OCI-LY7 (cell line): ENCODE measurements at regions of chr1 and their contacts with region 1.

Region 1: DNA sequence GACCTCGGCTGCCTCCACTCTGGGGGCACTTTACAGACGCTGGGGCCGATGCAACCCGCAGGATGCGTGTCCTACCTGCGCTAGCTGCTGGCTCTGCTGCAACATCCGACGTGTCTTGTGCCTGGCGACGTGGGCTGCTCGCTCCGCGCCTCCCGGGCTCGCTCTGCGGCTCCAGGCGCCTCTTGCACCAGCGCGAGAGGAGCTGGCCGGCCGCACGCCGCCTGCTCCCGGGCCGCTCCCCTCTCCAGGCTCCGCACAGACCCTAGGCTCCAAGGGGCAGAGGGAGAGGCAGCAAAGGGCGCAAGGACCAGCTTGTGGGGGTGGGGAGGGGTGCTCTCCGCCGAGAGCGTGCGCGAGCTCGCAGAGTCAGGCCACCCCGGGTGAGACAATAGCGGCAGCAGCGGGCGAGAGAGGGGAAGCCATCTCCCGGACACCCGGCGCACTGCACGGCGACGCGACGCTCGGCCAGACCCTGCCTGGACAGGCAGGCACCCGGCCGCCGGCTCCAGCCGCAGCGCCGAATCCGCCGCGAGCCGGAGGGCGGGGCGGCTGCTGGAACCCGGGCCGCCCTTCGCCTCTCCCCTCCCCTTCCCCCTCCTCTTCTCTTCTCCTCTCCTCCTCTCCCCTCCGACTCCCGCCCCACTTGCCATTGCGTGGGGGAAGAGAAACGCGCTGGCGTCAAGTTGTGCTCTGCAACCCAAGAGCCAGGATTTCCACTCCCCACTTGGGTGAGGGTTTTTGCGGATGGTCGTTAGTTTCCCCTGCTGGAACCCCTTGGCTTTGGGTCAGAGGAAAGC is at the start of gene PIK3C2B:
- DNase-seq: peak; percentile 84
- H3K4me3 ChIP-seq: peak within 1 kb of the TSS; percentile 79
- H3K27ac ChIP-seq: peak within 1 kb of the TSS; percentile 48
- H3K4me1 ChIP-seq: peaks cover 63% of the 10 kb centered on the region
- CTCF ChIP-seq: peak; percentile 56
- total RNA-seq, gene PIK3C2B: 11.9 and 12.5 TPM in 2 replicates

Region 2: GRCh38 chr1:204446370-204447111 is 47.9 kb before region 1 on chr1:
- CTCF ChIA-PET with region 1: interaction called, 35 read pairs
- POLR2A ChIA-PET with region 1: interaction called, 7 read pairs
- intact Hi-C with region 1: loop called (anchors 2 kb)
- DNase-seq: peak; percentile 88
- H3K4me3 ChIP-seq: no peak overlapping the region
- H3K27ac ChIP-seq: no peak overlapping the region
- H3K4me1 ChIP-seq: peaks cover 30% of the 10 kb centered on the region
- CTCF ChIP-seq: peak; percentile 83

Region 3: DNA sequence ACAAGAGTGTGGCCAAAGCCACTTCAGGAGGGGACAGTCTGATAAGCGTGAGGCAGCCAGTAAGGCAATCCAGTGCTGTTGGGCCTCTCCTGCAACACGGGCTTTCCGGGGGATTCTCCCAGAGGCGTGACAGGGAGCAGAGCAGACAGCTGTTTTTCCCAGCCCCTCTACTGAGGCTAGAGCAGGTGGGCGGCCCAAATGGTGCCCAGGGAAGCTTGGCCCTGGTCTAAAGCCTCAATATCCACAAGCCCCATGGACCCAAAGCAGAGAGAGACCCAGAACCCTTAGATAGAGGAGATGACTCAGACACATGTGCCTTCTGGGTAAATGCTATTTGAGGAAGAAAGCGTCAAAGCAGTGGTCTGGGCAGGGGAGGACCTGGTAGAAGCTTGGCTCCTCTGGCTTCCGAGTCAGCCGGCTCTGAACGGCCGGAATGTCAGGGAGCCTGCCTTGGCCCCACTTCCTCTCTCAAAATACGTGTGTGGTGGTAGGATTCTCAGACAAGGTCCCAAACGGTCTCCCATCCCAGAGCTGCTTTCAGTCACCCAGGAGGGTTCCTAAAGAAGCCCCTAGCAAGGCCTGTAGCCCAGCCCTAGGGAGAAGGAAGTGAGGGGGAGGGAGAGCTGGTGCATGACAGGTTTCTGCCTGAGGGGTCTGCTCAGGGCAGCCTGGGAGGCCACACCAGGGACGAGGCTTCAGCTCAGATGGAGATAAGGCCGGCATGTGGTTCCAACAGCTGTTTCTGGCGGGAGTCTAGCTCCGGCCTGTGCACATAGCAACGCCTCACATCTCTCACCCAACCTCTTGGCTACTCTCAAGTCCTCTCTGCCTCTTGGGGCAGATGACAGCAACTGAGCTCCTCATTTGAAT is 28.7 kb before region 1 on chr1:
- CTCF ChIA-PET with region 1: interaction called, 3 read pairs
- POLR2A ChIA-PET with region 1: interaction called, 17 read pairs
- intact Hi-C with region 1: no loop called
- DNase-seq: peak; percentile 51
- H3K4me3 ChIP-seq: no peak overlapping the region
- H3K27ac ChIP-seq: no peak overlapping the region
- H3K4me1 ChIP-seq: peaks cover 56% of the 10 kb centered on the region
- CTCF ChIP-seq: no peak

Region 4: DNA sequence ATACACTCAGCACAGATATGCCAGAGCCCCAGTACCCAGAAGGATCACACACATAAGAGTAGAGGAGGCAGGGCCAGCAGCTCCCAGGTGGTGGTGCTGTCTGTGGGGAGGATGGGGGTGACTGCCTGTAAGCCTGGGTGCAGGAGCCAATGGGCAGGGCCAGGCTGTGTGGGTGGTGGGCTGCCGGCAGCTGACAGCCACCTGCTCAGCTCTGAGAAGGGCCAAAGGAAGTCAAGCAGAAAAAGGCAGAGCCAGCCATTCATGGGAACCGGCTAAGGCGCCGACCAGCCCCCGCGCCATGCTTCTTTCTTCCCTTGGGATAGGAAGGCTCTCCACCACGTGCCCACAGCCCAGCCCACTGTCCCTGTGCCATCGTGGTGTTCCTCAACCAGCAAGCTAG is 14.0 kb before region 1 on chr1:
- CTCF ChIA-PET with region 1: interaction called, 26 read pairs
- POLR2A ChIA-PET with region 1: interaction called, 58 read pairs
- intact Hi-C with region 1: loop called (anchors 1 kb)
- DNase-seq: peak; percentile 84
- H3K4me3 ChIP-seq: peak overlapping the region; percentile 31
- H3K27ac ChIP-seq: peak overlapping the region; percentile 87
- H3K4me1 ChIP-seq: peaks cover 52% of the 10 kb centered on the region
- CTCF ChIP-seq: peak; percentile 65

Region 5: DNA sequence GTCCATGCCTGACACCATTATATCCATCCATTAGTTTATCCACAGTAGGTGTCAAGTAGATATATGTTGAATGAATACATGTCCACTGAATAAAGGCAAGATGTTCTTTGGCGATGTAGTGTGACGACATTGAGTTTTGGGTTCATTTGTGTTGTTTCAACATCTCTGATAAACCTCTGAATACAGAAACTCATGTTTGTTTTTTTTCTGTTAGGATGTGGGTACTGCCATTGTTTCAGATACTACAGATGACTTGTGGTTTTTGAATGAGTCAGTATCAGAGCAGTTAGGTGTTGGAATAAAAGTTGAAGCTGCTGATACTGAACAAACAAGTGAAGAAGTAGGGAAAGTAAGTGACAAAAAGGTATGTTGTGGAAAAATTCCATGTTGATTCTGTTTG is 49.8 kb after region 1 on chr1:
- CTCF ChIA-PET with region 1: no interaction called
- POLR2A ChIA-PET with region 1: no interaction called
- intact Hi-C with region 1: no loop called
- DNase-seq: no peak
- H3K4me3 ChIP-seq: no peak overlapping the region
- H3K27ac ChIP-seq: no peak overlapping the region
- H3K4me1 ChIP-seq: no peaks in the 10 kb centered on the region
- CTCF ChIP-seq: no peak

Region 6: DNA sequence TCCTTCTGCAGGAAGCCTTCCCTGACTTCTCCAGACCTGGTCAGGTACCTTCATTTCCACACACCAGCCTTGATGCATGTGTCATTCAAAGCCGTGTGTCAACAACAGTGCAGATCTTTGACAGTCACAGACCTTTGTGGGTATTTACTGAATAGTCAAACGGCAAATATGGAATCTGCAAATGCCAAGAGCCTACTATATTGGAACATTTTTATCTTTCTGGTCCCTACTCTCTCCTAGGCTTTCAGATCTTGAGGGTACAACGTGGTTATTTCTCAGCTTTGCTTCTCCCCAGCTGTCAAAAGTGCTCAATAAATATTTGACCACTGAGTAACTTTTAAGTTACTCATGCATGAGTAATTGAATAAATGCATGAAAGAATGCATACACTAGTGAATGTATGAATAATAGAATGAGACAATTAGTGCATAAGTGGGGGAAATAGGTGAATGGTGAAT is 97.1 kb after region 1 on chr1:
- CTCF ChIA-PET with region 1: no interaction called
- POLR2A ChIA-PET with region 1: no interaction called
- intact Hi-C with region 1: no loop called
- DNase-seq: no peak
- H3K4me3 ChIP-seq: no peak overlapping the region
- H3K27ac ChIP-seq: no peak overlapping the region
- H3K4me1 ChIP-seq: peaks cover 6% of the 10 kb centered on the region
- CTCF ChIP-seq: no peak

Region 7: DNA sequence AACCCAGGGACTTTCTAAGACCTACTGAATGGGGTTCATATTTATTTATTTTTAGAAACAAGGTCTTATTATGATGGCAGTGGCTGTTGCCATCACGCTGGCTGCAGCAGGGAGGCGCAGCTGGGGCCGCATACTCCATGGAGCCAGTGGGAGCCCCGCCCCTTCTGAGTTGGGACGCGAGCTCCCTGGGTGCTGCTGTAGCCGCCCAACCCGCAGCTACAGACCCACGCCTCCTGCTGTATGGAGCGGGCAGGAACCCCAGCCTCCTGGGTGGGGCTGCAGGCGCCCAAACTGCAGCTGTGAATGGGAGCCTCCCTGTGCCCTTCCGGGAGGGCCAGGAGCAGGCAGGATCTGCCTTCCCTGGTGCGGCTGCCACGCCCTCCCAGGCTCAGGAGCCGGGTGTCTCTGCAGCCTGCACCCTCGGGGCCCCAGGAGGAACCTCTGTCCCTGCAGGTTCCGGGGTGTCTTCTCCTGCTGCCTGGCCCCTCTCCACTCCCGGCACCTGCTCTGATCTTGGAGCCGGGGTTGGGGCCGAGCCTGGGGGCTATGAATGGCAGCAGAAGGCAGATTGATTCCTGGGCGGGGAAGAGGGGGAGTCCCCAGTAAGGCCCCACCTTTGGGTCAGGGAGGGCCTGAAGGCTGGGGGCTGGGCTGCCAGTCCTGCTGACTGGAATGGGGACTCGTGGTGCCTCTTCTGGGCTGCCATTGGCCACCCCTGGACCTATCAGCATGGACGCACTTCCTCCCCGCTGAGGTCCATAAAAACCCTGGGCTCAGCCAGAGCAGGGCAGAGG is 257.6 kb after region 1 on chr1:
- CTCF ChIA-PET with region 1: no interaction called
- POLR2A ChIA-PET with region 1: no interaction called
- intact Hi-C with region 1: no loop called
- DNase-seq: no peak
- H3K4me3 ChIP-seq: no peak overlapping the region
- H3K27ac ChIP-seq: no peak overlapping the region
- H3K4me1 ChIP-seq: no peaks in the 10 kb centered on the region
- CTCF ChIP-seq: no peak